Mammary epithelial cell (primary cell): ENCODE measurements at regions of chr2 and their contacts with region 1.

Region 1: GRCh38 chr2:226799181-226799975 is at the start of gene IRS1:
- DNase-seq: peak; percentile 71
- H3K4me3 ChIP-seq: peak within 1 kb of the TSS; percentile 82 to 92 (median 85)
- H3K27ac ChIP-seq: peak within 1 kb of the TSS; percentile 62
- H3K4me1 ChIP-seq: peaks cover 39% of the 10 kb centered on the region
- H3K27me3 ChIP-seq: no peaks in the 10 kb centered on the region
- CTCF ChIP-seq: peak in 1 of 2 donors; percentile 14
- total RNA-seq, gene IRS1: 25.8 to 36.2 TPM

Region 2: DNA sequence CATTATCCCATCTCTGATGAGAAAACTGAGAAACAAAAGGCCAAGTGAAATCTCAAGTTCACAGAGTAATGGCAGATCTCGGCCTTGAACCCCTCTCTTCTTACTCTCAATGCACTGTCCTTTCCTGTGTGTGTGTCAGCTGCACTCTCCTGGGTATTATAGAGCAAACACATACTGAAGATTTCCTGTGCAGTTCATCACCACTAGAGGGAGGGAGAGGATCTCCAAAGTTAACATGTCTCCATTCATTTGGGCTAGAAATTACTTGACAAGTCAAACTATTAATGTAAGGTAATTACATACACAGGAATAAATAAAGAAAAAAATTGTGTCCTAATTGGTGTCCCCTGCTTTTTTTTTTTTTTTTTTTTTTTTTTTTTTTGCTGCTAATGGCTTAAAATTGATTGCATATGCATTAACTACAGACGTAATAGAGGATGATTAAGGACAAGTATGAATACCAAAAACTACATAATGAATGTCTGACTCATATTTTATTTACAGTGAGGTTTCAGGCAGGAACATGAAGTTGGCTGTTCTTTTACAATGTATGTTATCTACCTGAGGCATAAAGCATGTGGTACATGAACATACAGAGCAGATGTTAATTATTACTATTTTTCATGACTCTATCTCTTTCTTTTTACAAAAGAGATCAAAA is 1130.6 kb before region 1 on chr2:
- CTCF ChIA-PET with region 1: interaction called, 10 read pairs
- dilution Hi-C with region 1: loop called (anchors 25 kb)
- in situ Hi-C with region 1: loop called (anchors 5 kb)
- intact Hi-C with region 1: loop called (anchors 1 kb)
- DNase-seq: peak; percentile 71
- H3K4me3 ChIP-seq: no peak overlapping the region
- H3K27ac ChIP-seq: peak overlapping the region; percentile 62
- H3K4me1 ChIP-seq: peaks cover 4% of the 10 kb centered on the region
- H3K27me3 ChIP-seq: no peaks in the 10 kb centered on the region
- CTCF ChIP-seq: peak; percentile 87 to 94

Region 3: DNA sequence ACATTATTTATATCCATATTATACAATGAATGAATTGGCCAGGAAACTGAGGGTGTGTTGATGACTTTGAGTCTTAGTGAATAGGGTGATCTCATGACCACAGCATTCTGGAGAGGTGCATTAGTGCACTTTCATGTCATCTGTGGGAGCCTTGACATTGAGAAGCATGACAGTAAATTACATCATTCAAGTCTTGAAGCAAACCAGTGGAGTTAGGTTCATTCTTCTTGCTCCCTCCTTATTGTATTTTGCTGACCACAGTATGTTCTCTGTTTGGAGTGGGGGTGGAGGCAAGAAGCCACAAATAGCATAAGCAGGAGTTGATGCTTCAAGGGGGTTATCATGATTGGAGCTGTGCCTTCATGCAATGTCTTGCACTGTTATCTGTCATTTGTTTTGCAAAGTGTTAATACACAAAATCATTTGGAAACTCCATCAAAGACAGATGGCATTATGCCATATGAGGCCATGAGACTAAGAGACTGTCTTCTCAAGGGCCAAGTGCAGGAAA is 719.7 kb before region 1 on chr2:
- CTCF ChIA-PET with region 1: no interaction called
- dilution Hi-C with region 1: no loop called
- in situ Hi-C with region 1: no loop called
- intact Hi-C with region 1: loop called (anchors 5 kb)
- DNase-seq: peak; percentile 96
- H3K4me3 ChIP-seq: no peak overlapping the region
- H3K27ac ChIP-seq: peak overlapping the region; percentile 94
- H3K4me1 ChIP-seq: peaks cover 46% of the 10 kb centered on the region
- H3K27me3 ChIP-seq: no peaks in the 10 kb centered on the region
- CTCF ChIP-seq: no peak

Region 4: DNA sequence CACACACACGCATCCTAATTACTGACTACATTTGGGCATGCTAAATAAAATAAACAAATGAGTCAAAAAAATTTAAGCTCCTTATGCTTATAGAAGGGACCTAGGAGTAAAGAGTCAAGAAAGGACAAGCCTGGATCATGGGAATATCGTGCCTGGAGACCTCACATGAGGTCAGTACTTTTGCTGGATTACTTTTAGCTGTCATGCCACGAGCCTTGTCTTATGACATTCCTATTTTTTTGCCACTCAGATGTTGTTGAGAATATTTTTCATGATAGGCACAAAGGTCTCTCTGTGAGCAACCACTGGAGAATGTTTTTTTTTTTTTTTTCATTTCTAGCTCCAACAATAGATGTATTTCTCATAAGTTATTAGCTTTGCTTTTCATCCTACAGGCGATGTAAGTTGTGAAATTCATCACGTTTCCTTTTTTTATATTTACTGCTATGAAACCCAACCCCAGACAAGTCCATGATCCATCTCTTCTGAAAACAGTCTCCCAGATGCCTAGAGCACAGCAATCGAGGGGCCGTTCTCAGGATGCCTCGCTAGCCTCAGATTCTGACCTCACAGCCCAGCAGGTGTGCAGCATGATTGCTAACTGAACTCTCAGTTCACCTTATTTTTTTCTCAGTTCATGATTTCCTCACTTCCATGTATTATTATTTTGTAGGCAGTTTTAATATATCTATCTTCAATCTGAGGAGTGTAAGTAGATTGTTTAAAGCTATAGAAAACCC is 464.2 kb before region 1 on chr2:
- CTCF ChIA-PET with region 1: no interaction called
- dilution Hi-C with region 1: no loop called
- in situ Hi-C with region 1: no loop called
- intact Hi-C with region 1: loop called (anchors 5 kb)
- DNase-seq: peak; percentile 70
- H3K4me3 ChIP-seq: no peak overlapping the region
- H3K27ac ChIP-seq: no peak overlapping the region
- H3K4me1 ChIP-seq: peaks cover 19% of the 10 kb centered on the region
- H3K27me3 ChIP-seq: no peaks in the 10 kb centered on the region
- CTCF ChIP-seq: no peak

Region 5: DNA sequence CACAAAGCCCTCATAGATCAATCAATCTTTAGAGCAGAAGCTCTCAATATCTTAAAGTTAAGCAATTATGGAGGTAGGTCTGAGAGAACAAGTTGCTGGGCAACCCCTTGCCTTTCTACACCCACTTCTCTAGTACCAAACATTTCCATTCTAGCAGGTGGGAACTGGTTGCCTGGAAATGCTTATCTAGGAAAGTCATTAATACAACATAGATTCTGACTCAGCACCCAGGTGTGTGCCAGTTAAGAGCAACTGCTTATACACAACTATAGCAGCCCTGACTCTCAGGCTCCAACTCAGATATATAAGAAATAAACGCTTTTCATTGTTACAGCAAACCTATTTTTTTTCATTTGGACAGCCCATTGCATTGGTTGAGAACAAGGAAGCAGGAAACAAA is 237.4 kb before region 1 on chr2:
- CTCF ChIA-PET with region 1: no interaction called
- dilution Hi-C with region 1: no loop called
- in situ Hi-C with region 1: no loop called
- intact Hi-C with region 1: loop called (anchors 5 kb)
- DNase-seq: peak; percentile 90
- H3K4me3 ChIP-seq: no peak overlapping the region
- H3K27ac ChIP-seq: peak overlapping the region; percentile 40
- H3K4me1 ChIP-seq: peaks cover 23% of the 10 kb centered on the region
- H3K27me3 ChIP-seq: no peaks in the 10 kb centered on the region
- CTCF ChIP-seq: no peak

Region 6: DNA sequence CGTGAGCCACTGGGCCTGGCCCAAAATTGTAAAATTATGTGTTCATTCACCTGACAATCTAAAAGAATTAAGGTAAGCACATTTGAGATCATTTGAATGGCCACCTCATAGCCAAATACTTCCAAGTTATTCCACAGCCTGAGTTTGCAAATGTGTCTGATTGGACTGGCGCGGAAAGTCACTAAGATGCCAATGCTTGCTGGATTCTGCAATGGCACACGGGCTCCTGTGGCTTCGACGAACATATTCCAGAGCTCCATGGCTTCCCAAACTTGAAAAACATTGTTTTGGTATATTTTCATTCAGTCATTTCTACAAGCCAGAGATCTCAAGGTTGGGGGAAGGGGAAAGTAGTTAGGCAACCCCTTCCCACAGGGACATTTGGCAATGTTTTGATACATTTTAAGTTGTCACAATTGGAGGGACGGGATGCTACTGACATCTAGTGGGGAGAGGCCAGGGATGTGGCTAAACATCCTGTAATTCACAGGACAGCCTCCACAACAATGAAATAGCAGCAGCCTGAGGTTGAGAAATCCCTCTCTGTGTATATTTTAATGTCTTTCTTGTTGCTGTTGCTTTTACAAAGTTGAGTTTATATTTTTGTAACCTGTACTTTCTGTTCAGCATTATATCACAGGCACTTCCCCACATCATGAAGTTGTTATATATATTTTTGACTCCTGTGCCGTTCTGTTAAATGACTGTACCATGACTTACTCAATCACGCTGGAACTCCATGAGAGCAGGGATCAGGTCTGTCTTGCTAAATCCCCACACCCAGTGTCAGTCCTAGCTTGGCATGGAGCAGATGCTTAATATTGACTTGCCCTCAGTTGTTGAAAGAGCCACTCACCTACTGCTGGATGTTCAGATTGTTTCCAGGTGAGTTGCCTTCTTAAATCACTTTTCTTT is 307.7 kb after region 1 on chr2:
- CTCF ChIA-PET with region 1: no interaction called
- dilution Hi-C with region 1: no loop called
- in situ Hi-C with region 1: loop called in 1 of 2 experiments (anchors 25 kb)
- intact Hi-C with region 1: loop called (anchors 1 kb)
- DNase-seq: peak; percentile 30
- H3K4me3 ChIP-seq: no peak overlapping the region
- H3K27ac ChIP-seq: no peak overlapping the region
- H3K4me1 ChIP-seq: no peaks in the 10 kb centered on the region
- H3K27me3 ChIP-seq: peaks cover 1% of the 10 kb centered on the region
- CTCF ChIP-seq: peak; percentile 73 to 85